IMR-90 (cell line): ENCODE measurements at regions of chr12 and their contacts with region 1.

Region 1: DNA sequence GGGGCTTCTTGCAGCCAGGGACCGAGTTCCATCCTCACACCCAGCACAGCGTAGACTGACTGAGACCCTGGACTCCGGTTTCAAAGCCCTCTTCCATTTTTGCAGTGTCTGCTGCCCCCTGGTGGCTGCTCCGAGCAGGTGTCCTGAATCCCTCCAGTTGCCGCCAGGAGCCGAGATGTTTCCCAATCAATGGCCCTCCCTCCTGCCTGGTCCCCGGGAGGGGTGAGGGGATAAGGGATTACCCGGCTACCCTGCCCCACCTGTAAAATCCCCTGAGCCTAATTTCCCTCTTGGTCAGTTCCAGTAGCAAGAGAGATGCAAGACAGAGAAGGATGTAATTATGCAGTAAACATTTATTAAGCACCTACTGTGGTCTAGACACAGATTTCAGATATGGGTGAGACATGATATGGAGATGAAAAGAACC is 55.0 kb downstream of the PHETA1 start:
- DNase-seq: peak; percentile 57
- ATAC-seq: peak; percentile 94
- H3K4me3 ChIP-seq: no peak overlapping the region
- H3K27ac ChIP-seq: no peak overlapping the region
- H3K4me1 ChIP-seq: no peaks in the 10 kb centered on the region
- H3K27me3 ChIP-seq: peaks cover 7% of the 10 kb centered on the region
- CTCF ChIP-seq: peak; percentile 85
- POLR2A ChIP-seq: no peak
- RAD21 ChIP-seq: peak; percentile 74

Region 2: GRCh38 chr12:110896559-110896958 is 417.3 kb before region 1 on chr12:
- CTCF ChIA-PET with region 1: no interaction called
- POLR2A ChIA-PET with region 1: no interaction called
- dilution Hi-C with region 1: no loop called
- in situ Hi-C with region 1: no loop called
- intact Hi-C with region 1: loop called (anchors 1 kb)
- DNase-seq: no peak
- ATAC-seq: no peak
- H3K4me3 ChIP-seq: no peak overlapping the region
- H3K27ac ChIP-seq: no peak overlapping the region
- H3K4me1 ChIP-seq: no peaks in the 10 kb centered on the region
- H3K27me3 ChIP-seq: peaks cover 3% of the 10 kb centered on the region; the same call in 1 of the 2 replicates
- CTCF ChIP-seq: no peak
- POLR2A ChIP-seq: no peak
- RAD21 ChIP-seq: no peak

Region 3: DNA sequence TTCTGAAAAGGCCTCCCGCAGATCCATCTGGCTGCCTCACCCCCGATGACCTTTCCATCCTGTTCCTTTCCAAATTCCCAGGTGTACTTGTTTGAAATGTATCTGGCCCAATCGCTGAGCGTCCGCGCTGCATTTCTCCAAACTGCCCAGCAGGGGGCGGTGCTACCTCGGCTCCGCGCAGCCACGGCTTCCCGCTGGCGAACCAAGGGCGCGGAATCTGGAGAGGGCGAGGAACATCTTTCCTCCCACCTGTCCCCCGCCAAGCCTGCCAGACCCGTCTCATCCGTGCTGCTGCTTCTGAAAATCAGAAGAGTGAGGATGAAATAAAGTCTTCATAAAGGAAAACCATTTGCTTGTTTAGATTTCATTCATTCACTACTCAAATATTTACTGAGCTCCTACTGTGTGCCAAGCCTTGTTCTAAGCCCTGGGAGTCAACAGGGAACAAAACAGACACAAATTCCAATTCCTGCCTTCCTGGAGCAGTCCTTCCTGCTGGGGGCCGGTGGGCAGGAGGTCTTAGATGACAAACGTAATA is 376.7 kb before region 1 on chr12:
- CTCF ChIA-PET with region 1: interaction called, 7 read pairs
- POLR2A ChIA-PET with region 1: interaction called, 5 read pairs
- dilution Hi-C with region 1: no loop called
- in situ Hi-C with region 1: loop called (anchors 10 kb)
- intact Hi-C with region 1: loop called (anchors 1 kb)
- DNase-seq: peak; percentile 23
- ATAC-seq: peak; percentile 89
- H3K4me3 ChIP-seq: no peak overlapping the region
- H3K27ac ChIP-seq: no peak overlapping the region
- H3K4me1 ChIP-seq: no peaks in the 10 kb centered on the region
- H3K27me3 ChIP-seq: peaks cover 4% of the 10 kb centered on the region
- CTCF ChIP-seq: peak; percentile 78
- POLR2A ChIP-seq: no peak
- RAD21 ChIP-seq: peak; percentile 75

Region 4: DNA sequence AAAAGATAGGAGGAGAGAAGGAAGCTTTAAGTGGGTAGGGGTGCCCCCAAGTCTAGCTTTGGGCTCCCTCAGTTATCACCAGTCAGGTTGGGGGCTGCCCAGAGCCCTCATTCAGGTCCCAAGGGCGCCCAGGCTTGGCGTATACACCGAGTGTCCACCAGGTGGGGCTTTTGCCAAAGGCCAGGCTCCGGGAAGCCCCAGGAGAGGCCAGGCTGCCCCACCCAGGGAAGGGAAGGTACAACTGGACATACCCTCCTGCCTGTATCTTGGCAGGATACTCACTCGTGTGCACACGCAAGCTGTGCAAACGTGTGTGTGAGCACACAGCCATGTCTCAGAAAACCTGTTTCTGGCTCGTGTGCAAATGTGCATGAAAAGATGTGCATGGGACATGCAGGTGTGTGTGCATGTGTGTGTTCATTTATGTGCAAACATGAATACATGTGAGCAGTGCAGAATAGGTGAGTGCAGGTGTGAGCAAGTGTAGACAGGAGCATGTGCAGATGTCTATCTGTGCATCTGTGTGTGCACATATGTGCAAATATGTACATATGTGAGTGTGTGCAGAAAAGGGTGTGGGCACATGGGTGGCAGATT is 289.5 kb before region 1 on chr12:
- CTCF ChIA-PET with region 1: interaction called, 6 read pairs
- POLR2A ChIA-PET with region 1: no interaction called
- dilution Hi-C with region 1: no loop called
- in situ Hi-C with region 1: loop called (anchors 5 kb)
- intact Hi-C with region 1: loop called (anchors 1 kb)
- DNase-seq: peak; percentile 4
- ATAC-seq: peak; percentile 88
- H3K4me3 ChIP-seq: no peak overlapping the region
- H3K27ac ChIP-seq: no peak overlapping the region
- H3K4me1 ChIP-seq: no peaks in the 10 kb centered on the region
- H3K27me3 ChIP-seq: peaks cover 3% of the 10 kb centered on the region
- CTCF ChIP-seq: peak; percentile 48
- POLR2A ChIP-seq: no peak
- RAD21 ChIP-seq: peak; percentile 51

Region 5: DNA sequence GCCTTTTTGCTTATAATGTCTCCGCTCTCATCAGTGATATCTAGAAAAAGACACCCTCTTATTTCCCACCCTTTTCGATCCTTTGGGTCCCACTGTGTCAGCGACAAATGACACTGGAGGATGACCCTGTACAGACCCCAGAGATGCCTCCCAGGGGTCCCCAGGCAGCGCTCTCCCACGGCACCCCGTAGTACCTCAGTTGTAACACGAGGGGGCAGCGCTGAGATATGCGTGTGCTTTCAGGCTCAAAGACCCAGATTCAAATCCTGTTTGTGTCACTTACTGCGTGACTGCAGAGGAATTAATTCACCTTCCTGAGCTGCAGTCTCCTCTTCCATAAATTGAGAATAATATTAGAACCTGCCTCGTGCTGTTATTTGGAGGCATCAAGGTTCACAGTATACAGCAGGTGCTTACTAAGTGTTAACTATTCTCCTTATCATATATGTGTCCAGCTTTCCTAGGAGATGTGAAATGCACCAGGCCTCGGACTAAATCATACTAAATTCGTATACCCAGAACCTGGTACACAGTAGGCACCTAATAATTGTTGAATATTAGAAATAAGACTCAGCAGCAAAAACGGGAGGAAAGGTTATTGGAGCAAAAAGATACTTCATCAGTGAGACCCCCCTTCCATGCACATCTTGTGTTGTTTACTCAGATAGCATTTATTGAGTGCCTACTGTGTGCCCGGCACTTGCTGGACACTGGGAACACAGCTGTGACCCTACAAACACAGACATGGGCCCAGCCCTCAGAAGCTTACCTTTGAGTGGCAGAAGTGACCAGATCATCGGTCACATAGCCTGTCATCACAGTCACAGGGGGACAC is 44.9 kb before region 1 on chr12:
- CTCF ChIA-PET with region 1: no interaction called
- POLR2A ChIA-PET with region 1: no interaction called
- dilution Hi-C with region 1: no loop called
- in situ Hi-C with region 1: no loop called
- intact Hi-C with region 1: loop called (anchors 1 kb)
- DNase-seq: no peak
- ATAC-seq: no peak; the same call in 1 of the 2 replicates
- H3K4me3 ChIP-seq: no peak overlapping the region
- H3K27ac ChIP-seq: no peak overlapping the region
- H3K4me1 ChIP-seq: no peaks in the 10 kb centered on the region
- H3K27me3 ChIP-seq: peaks cover 22% of the 10 kb centered on the region
- CTCF ChIP-seq: peak; percentile 33; the same call in 1 of the 2 replicates
- POLR2A ChIP-seq: no peak
- RAD21 ChIP-seq: 0 out of 2 replicates have a peak, but pooled peaks have one; percentile 13